Breast epithelium (tissue), 4 donors: ENCODE measurements at regions of chr4 and their contacts with region 1.

Region 1: DNA sequence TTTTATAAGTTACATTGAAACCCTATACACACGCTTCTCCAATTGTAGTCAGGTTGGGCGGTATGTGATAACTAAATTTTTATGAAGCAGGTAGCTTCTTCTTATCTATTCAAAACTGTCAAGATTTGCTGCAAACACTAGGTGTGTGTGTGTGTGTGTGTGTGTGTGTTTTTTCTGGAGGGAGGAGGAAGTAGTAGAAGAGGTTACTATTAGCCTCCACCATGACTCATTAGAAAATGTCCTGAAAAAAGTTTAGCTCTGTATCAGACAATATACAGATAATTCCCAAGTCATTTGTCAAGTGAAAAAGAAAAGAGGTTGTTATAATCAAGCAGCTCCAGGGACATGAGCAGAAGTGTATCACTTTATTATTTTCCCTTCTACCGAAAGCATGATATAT is 33.9 kb downstream of the PCDH7 start:
- DNase-seq: no peak
- H3K4me3 ChIP-seq: no peak overlapping the region
- H3K27ac ChIP-seq: no peak overlapping the region
- H3K4me1 ChIP-seq: no peaks in the 10 kb centered on the region
- H3K27me3 ChIP-seq: no peaks in the 10 kb centered on the region
- CTCF ChIP-seq: no peak
- POLR2A ChIP-seq: no peak

Region 2: GRCh38 chr4:30770049-30770549 is 16.1 kb after region 1 on chr4:
- intact Hi-C with region 1: no loop called
- DNase-seq: no peak
- H3K4me3 ChIP-seq: no peak overlapping the region
- H3K27ac ChIP-seq: no peak overlapping the region
- H3K4me1 ChIP-seq: peaks cover 0 to 5% of the 10 kb centered on the region in 2 donors
- H3K27me3 ChIP-seq: no peaks in the 10 kb centered on the region
- CTCF ChIP-seq: no peak
- POLR2A ChIP-seq: no peak

Region 3: DNA sequence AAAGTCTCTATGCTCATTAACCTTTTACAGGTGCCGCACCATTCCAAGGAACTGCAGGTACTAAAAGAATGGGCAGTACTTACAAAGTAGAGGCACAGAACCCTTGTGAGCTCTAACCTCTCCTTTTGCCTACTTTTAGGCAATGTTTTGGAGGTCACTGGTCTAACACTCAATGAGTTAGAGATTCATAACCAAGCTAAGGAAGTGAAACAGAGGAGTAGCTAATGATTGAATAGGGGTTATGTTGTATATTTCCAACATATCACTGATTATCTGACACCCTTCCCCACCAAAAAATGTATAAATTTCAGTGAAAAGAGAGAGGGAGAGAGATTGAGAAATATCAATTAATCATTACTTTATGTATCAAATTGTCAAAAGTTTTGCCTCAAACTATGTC is 235.5 kb after region 1 on chr4:
- intact Hi-C with region 1: loop called (anchors 5 kb)
- DNase-seq: no peak
- H3K4me3 ChIP-seq: no peak overlapping the region
- H3K27ac ChIP-seq: no peak overlapping the region
- H3K4me1 ChIP-seq: no peaks in the 10 kb centered on the region
- H3K27me3 ChIP-seq: no peaks in the 10 kb centered on the region
- CTCF ChIP-seq: no peak
- POLR2A ChIP-seq: no peak